Lower leg skin (tissue), 4 donors: ENCODE measurements at regions of chr3 and their contacts with region 1.

Region 1: DNA sequence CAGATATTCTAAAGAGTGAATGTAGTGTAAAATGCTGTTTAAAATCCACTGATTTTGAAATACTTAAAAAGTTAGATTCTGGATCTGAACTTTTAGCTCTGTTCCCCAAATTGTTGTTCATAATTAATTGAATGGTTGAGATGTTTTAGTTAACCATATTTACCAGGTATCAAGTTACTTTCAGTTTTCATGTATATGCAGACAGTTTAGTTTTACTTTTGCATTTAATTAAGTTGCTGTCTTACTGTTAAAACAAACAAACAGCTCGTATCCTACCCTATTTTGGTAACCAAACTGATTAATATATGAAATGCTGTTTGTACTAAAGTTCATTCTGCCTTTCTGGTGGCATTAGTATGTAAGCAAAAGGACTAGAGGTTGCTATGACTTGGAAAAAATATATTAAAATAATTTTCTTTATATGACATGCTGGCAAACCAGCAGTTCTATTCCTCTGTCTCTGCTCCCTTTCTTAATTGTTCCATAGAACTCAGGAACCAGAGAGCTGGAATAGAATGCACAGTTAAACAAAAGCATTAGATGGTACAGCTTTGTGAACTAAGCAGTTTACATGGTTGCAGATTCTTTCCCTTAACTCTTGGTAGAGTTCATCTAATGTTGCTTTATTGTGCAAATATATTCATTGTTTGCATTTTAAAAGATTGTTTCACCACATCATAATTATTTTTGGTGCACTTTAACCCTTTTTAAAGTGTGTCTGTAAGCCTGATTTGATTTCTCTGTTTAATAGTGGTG is 39.5 kb upstream of the SCAANT1 start:
- DNase-seq: no peak
- H3K4me3 ChIP-seq: no peak overlapping the region
- CTCF ChIP-seq: no peak
- POLR2A ChIP-seq: no peak

Region 2: DNA sequence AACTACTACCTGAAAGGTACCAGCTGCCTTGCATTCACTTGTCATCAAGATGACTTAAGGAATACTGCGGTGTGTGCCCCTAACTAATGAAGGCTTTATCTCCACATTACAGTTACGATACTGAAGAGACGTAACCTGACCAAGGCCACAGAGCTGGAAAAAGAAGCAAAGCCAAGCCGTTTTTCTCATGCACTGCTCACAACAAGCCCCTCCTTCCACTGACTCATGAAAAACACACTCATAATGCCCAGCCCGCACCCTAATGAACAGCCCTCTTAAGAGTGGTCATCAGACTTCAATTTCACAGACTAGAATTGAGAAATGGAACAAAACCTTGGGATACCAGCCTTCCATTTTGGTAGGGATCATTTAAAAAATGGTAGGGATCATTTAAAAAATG is 60.0 kb after region 1 on chr3:
- intact Hi-C with region 1: loop called (anchors 10 kb)
- DNase-seq: no peak
- H3K4me3 ChIP-seq: no peak overlapping the region
- CTCF ChIP-seq: no peak
- POLR2A ChIP-seq: no peak